ENCODE measurements at regions of chr9 and their contacts with region 1.

Region 1: DNA sequence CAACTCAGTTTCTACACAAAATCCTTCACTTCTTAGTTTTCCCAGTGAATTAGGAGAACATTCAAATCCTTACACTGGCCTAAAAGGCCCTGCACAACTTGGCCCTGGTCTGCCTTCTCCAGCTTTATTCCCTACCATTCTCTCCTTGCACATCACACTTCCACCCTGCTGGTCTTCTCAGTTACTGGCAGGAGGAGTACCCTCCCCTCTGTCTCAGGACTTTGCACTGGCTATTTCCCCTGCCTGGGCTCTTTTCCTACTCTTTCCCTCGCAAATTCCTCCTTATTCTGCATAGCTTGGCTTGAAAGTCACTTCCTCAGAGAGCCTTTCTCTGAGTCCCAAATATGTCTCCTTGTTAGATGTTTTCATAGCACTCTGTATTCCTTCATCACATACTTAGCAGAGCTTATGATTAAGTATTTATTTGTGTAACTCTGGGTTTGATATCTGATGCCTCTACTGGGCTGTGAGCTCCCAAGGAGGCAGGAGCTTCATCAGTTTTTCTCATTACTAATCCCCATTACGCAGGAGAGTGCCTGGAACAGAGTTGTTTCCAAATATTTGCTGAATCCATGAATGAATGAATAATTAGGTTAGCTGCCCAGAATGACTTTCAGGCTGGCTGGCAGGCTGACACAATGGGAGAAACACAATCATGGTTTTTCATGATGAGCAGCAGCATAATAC is 159.8 kb upstream of the KLF9 start:
- DNase-seq: peak; percentile 32
- H3K4me3 ChIP-seq: no peak overlapping the region
- H3K27ac ChIP-seq: no peak overlapping the region
- H3K4me1 ChIP-seq: peaks cover 10% of the 10 kb centered on the region
- H3K27me3 ChIP-seq: no peaks in the 10 kb centered on the region
- CTCF ChIP-seq: no peak
- POLR2A ChIP-seq: no peak

Region 2: GRCh38 chr9:70525519-70525918 is 48.8 kb before region 1 on chr9:
- CTCF ChIA-PET with region 1: no interaction called
- POLR2A ChIA-PET with region 1: no interaction called
- dilution Hi-C with region 1: no loop called
- intact Hi-C with region 1: loop called (anchors 2 kb)
- DNase-seq: peak; percentile 74
- H3K4me3 ChIP-seq: no peak overlapping the region
- H3K27ac ChIP-seq: peak overlapping the region; percentile 43
- H3K4me1 ChIP-seq: peaks cover 8% of the 10 kb centered on the region
- H3K27me3 ChIP-seq: no peaks in the 10 kb centered on the region
- CTCF ChIP-seq: no peak
- POLR2A ChIP-seq: no peak

Region 3: GRCh38 chr9:70553707-70554673 is 20.3 kb before region 1 on chr9:
- CTCF ChIA-PET with region 1: interaction called, 5 read pairs
- POLR2A ChIA-PET with region 1: no interaction called
- dilution Hi-C with region 1: no loop called
- intact Hi-C with region 1: loop called (anchors 1 kb)
- DNase-seq: peak; percentile 69
- H3K4me3 ChIP-seq: peak overlapping the region in 1 of 3 experiments; percentile 16
- H3K27ac ChIP-seq: peak overlapping the region; percentile 89
- H3K4me1 ChIP-seq: peaks cover 24% of the 10 kb centered on the region
- H3K27me3 ChIP-seq: no peaks in the 10 kb centered on the region
- CTCF ChIP-seq: no peak
- POLR2A ChIP-seq: peak; percentile 45

Region 4: GRCh38 chr9:70563431-70564204 is 10.7 kb before region 1 on chr9:
- CTCF ChIA-PET with region 1: interaction called, 12 read pairs
- POLR2A ChIA-PET with region 1: no interaction called
- dilution Hi-C with region 1: no loop called
- intact Hi-C with region 1: no loop called
- DNase-seq: no peak
- H3K4me3 ChIP-seq: no peak overlapping the region
- H3K27ac ChIP-seq: no peak overlapping the region
- H3K4me1 ChIP-seq: no peaks in the 10 kb centered on the region
- H3K27me3 ChIP-seq: no peaks in the 10 kb centered on the region
- CTCF ChIP-seq: no peak
- POLR2A ChIP-seq: no peak

Region 5: GRCh38 chr9:70587201-70587600 is 12.9 kb after region 1 on chr9:
- CTCF ChIA-PET with region 1: interaction called, 6 read pairs
- POLR2A ChIA-PET with region 1: no interaction called
- dilution Hi-C with region 1: no loop called
- intact Hi-C with region 1: loop called (anchors 1 kb)
- DNase-seq: peak; percentile 83
- H3K4me3 ChIP-seq: no peak overlapping the region
- H3K27ac ChIP-seq: peak overlapping the region; percentile 68
- H3K4me1 ChIP-seq: peaks cover 34% of the 10 kb centered on the region
- H3K27me3 ChIP-seq: no peaks in the 10 kb centered on the region
- CTCF ChIP-seq: no peak
- POLR2A ChIP-seq: no peak

Region 6: DNA sequence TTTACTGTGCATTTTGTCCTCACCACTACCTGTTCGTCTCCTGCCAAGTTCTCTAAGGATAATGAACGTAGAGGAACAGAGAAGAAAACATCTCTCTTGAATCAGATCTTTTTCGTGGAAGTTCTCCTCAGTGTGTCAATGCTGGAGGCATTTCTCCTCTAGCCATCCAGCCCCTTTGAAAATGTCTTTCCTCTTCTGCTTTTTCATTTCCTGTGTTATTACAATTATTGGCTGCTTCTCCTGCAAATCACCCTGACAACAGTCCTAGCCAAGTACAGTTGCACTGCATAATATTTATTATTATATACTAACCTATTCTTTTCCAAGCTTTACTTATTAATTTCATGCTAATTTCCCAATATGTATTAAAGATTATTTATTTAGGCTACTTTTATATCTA is 609.0 kb after region 1 on chr9:
- CTCF ChIA-PET with region 1: no interaction called
- POLR2A ChIA-PET with region 1: no interaction called
- dilution Hi-C with region 1: no loop called
- intact Hi-C with region 1: no loop called
- DNase-seq: peak; percentile 6
- H3K4me3 ChIP-seq: no peak overlapping the region
- H3K27ac ChIP-seq: no peak overlapping the region
- H3K4me1 ChIP-seq: no peaks in the 10 kb centered on the region
- H3K27me3 ChIP-seq: no peaks in the 10 kb centered on the region
- CTCF ChIP-seq: no peak
- POLR2A ChIP-seq: no peak

Measured in endothelial cell of umbilical vein (primary cell).